OCI-LY7 (cell line): ENCODE measurements at regions of chr4 and their contacts with region 1.

Region 1: DNA sequence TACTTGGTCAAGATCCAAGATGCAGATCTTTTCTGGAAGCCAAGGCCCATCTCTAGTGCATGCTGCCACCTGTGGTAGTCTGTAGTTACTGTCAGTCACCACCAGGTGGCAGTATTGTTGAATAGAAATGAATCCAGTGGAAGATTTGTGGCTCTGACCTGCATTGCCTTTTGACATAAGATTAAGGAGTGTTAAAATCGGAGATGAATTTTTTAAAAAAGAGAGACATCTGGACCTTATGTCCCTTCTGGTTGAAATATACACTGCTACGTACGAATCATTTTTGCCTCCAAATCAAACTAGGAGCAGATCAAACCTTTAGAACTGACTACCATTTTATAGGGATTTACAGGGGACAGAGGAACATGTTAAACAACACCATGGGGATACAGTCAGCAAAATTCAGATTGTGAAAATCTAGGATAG is 46.9 kb upstream of the RHOH start:
- DNase-seq: peak; percentile 93
- H3K4me3 ChIP-seq: no peak overlapping the region
- H3K27ac ChIP-seq: no peak overlapping the region
- H3K4me1 ChIP-seq: peaks cover 22% of the 10 kb centered on the region
- CTCF ChIP-seq: peak; percentile 92

Region 2: GRCh38 chr4:39626261-39626660 is 523.7 kb before region 1 on chr4:
- CTCF ChIA-PET with region 1: no interaction called
- POLR2A ChIA-PET with region 1: no interaction called
- intact Hi-C with region 1: no loop called
- DNase-seq: peak; percentile 89
- H3K4me3 ChIP-seq: no peak overlapping the region
- H3K27ac ChIP-seq: no peak overlapping the region
- H3K4me1 ChIP-seq: peaks cover 39% of the 10 kb centered on the region
- CTCF ChIP-seq: no peak

Region 3: GRCh38 chr4:39961311-39961877 is 188.6 kb before region 1 on chr4:
- CTCF ChIA-PET with region 1: no interaction called
- POLR2A ChIA-PET with region 1: no interaction called
- intact Hi-C with region 1: no loop called
- DNase-seq: no peak
- H3K4me3 ChIP-seq: peak overlapping the region; percentile 42
- H3K27ac ChIP-seq: peak overlapping the region; percentile 80
- H3K4me1 ChIP-seq: peaks cover 49% of the 10 kb centered on the region
- CTCF ChIP-seq: no peak

Region 4: DNA sequence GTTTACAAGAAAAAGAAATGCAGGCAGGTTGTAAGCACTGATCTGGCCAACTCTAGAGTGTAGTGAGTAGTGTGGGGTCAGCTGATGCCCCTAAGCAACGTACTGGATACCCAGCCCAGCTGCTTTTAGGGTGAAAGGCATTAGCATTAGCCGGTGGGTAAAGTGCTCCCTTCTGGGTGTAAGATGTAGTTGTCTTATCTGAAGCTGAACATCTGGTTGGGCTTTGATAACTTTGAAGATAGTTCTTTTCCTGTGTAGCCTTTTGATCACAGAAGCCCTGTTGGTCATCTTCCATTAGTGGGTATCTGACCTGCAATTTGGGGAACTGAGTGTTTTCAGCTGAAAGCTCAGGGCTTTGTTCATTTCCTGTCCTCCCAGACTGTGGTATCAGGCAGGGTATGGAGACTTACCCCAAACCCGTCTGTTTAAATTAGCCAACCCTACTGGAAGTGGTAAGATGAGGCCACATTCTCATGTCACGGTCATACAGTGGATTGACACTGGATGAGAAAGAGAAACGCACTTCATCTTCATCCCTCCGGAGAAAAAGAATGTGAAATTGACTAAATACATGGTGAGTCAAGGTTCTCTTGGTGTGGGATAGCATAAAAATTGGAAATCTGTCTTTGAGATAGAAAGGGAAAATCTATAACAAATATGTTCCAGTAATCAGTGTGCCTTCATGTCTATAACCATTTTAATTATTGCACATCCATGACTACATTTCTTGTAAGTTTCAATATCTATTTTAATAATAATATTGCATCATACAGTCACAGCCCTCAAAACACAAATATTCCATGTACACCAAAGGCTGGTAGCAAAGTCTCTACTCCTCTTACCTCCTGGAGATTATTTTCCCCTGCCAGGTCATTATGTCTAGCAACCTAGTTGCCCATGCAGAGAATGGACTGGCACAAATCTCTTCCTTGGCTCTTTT is 55.6 kb after region 1 on chr4:
- CTCF ChIA-PET with region 1: no interaction called
- POLR2A ChIA-PET with region 1: interaction called, 3 read pairs
- intact Hi-C with region 1: loop called (anchors 2 kb)
- DNase-seq: peak; percentile 88
- H3K4me3 ChIP-seq: peak overlapping the region; percentile 79
- H3K27ac ChIP-seq: peak overlapping the region; percentile 93
- H3K4me1 ChIP-seq: peaks cover 90% of the 10 kb centered on the region
- CTCF ChIP-seq: no peak

Region 5: DNA sequence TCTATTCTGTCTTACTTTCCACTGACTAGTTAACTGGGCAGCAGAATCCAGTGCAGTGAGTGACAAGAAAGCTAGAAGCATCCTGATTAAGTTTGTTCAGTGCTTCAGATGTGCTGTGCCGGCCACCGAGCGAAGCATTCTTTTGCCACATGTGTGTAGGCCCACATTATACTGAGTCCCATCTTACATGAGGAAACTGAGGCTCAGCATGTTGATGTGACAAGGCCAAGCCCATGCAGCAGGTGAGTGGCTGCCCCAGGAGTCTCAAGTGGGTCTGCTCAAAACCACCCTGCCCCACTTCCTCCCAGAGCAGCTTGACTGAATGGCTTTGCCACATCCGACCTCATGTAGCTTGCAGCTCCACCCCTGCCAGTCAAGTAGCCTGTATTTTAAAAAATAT is 97.4 kb after region 1 on chr4:
- CTCF ChIA-PET with region 1: no interaction called
- POLR2A ChIA-PET with region 1: interaction called, 10 read pairs
- intact Hi-C with region 1: loop called (anchors 5 kb)
- DNase-seq: peak; percentile 33
- H3K4me3 ChIP-seq: no peak overlapping the region
- H3K27ac ChIP-seq: no peak overlapping the region
- H3K4me1 ChIP-seq: no peaks in the 10 kb centered on the region
- CTCF ChIP-seq: no peak

Region 6: DNA sequence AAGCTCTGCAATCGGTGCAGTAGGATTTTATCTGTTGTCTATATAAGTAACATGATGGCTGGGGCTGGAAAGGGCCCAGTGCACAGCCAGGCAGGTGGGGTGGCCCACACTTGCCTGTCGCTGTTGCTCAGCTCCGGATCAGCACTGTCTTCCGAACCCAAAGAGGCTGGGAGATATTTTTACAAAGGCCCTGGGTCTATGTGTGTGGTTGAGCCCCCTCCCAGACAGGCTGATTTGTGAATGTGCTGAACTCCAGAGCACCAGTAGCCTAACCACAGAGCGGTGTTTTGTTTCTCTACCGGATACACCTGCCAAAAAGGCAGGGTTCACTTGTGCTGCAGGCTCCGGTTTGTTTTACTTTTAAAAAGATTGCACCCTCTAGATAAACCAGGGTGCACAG is 151.6 kb after region 1 on chr4:
- CTCF ChIA-PET with region 1: interaction called, 6 read pairs
- POLR2A ChIA-PET with region 1: interaction called, 8 read pairs
- intact Hi-C with region 1: loop called (anchors 2 kb)
- DNase-seq: peak; percentile 98
- H3K4me3 ChIP-seq: peak overlapping the region; percentile 59
- H3K27ac ChIP-seq: peak overlapping the region; percentile 98
- H3K4me1 ChIP-seq: peaks cover 84% of the 10 kb centered on the region
- CTCF ChIP-seq: no peak

Region 7: DNA sequence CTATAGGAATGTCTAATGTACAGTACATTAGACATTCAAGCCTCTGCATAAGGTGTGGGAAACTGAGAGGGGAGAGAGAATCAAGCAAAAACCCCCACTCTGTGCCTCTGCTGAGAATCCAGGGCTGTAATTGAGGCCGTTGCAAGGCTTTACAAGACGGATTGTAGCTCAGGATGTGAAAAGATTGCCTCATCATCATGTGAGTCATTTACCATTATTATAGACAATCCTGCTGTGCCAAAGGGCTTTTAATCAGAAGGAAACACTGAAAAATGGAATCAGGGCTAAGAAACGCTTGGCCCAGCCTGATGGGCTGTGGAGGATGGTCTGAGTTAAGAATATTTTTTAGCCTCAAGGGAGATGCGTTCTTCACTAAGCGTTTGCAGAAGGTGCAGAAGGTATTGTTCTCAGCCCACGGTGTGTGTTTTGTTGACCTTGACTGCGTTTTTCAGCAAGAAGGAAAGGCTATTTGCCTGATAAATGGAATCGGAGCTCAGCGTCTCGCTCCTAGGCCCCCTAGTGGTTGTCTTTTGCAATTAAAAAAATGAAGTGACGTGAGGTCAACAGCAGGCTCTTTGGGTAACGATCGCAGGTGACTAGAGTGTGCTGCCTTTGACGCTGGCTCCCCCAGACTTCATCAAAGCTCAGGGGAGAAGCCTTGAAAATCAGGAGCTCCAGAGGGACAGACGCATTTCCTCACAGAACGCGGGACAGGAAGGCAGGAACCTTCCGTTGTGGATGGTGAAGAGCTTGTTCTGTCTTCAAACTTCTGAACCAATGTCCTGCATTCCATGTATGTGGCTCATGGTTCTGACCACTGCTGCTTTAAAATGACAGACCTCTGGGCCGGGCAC is 167.0 kb after region 1 on chr4:
- CTCF ChIA-PET with region 1: no interaction called
- POLR2A ChIA-PET with region 1: interaction called, 6 read pairs
- intact Hi-C with region 1: loop called (anchors 2 kb)
- DNase-seq: peak; percentile 86
- H3K4me3 ChIP-seq: peak overlapping the region; percentile 46
- H3K27ac ChIP-seq: peak overlapping the region; percentile 41
- H3K4me1 ChIP-seq: peaks cover 16% of the 10 kb centered on the region
- CTCF ChIP-seq: peak; percentile 90

Region 8: GRCh38 chr4:40325189-40326019 is 175.4 kb after region 1 on chr4:
- CTCF ChIA-PET with region 1: no interaction called
- POLR2A ChIA-PET with region 1: interaction called, 3 read pairs
- intact Hi-C with region 1: loop called (anchors 2 kb)
- DNase-seq: peak; percentile 85
- H3K4me3 ChIP-seq: no peak overlapping the region
- H3K27ac ChIP-seq: no peak overlapping the region
- H3K4me1 ChIP-seq: peaks cover 4% of the 10 kb centered on the region
- CTCF ChIP-seq: peak; percentile 99

Region 9: DNA sequence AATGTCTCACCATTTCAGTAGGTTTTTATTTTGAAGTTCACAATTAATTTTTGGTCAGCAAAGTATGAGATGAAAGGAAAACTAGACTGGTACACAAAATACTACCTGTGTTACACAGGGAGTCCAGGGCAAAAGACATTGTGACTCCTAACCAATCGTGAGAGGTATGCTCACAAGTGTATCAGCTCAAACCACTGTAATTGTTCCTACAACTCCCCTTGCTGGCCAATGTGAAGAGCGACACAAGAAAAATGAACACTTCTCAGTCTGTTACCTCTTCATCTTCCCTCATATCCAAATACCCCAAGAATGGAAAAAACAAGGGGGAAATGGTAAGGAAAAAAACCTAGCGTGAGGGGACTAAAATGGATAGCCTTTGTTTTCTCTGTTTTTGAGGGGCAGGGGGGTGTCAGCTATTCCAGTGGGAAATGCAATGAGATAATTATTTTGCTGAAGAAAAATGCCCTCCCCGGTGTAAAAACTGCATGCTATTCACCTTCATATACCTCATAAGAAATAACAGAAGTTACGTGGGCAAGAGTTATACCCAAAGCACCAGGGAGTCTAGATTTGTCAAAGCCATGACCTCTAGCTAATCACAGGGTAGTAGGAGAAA is 569.1 kb after region 1 on chr4:
- CTCF ChIA-PET with region 1: no interaction called
- POLR2A ChIA-PET with region 1: no interaction called
- intact Hi-C with region 1: loop called (anchors 1 kb)
- DNase-seq: peak; percentile 71
- H3K4me3 ChIP-seq: no peak overlapping the region
- H3K27ac ChIP-seq: no peak overlapping the region
- H3K4me1 ChIP-seq: peaks cover 8% of the 10 kb centered on the region
- CTCF ChIP-seq: peak; percentile 84

Region 10: GRCh38 chr4:40800064-40800463 is 650.1 kb after region 1 on chr4:
- CTCF ChIA-PET with region 1: no interaction called
- POLR2A ChIA-PET with region 1: no interaction called
- intact Hi-C with region 1: no loop called
- DNase-seq: no peak
- H3K4me3 ChIP-seq: no peak overlapping the region
- H3K27ac ChIP-seq: no peak overlapping the region
- H3K4me1 ChIP-seq: no peaks in the 10 kb centered on the region
- CTCF ChIP-seq: no peak